ENCODE measurements at regions of chr15 and their contacts with region 1.

Region 1: DNA sequence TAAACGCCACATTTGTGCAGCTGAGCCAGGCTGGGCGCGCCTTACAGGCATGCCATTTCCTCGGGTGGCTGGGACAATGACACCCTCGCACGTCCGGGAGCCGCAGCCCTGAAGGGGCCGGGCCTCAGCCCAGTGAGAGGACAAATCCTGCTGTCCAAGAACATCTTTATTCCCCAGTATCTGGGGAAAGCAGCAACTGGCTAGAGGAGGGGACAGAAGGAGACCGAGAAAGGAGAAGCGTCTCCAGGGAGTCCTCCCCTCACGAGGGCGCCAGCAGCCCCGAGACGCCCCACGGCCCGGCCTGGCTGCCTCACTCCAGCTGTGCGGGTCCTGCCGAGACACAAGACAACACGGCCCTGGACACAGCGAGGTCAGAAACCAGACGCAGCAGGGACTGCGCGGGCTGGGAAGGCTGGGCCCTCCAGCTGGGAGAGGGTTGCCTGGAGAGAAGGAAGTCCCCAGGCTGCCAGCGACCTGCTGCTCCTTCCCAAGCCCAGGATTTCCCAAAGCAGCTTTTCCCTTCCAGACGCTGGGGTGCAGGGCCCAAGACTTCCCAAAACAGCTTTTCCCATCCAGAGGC is 130.2 kb downstream of the CHSY1 start:
- DNase-seq: peak; percentile 50 to 66 (median 53)
- H3K4me3 ChIP-seq: peak overlapping the region; percentile 14 to 39 (median 37)
- H3K4me3 Mint-ChIP-seq: peak overlapping the region; percentile 85 to 87
- H3K27ac ChIP-seq: no peak overlapping the region
- H3K27ac Mint-ChIP-seq: peak overlapping the region in 6 of 7 donors; percentile 26 to 88 (median 68)
- H3K4me1 ChIP-seq: peaks cover 46 to 57% of the 10 kb centered on the region in 2 donors
- H3K4me1 Mint-ChIP-seq: peaks cover 57% of the 10 kb centered on the region
- H3K27me3 ChIP-seq: no peaks in the 10 kb centered on the region
- H3K27me3 Mint-ChIP-seq: peaks cover 1 to 6% (median 2%) of the 10 kb centered on the region in 3 donors
- CTCF ChIP-seq: peak; percentile 41

Region 2: GRCh38 chr15:101242160-101242998 is 120.8 kb after region 1 on chr15:
- intact Hi-C with region 1: loop called in 1 of 2 experiments (anchors 2 kb)
- DNase-seq: peak; percentile 85 to 91 (median 87)
- H3K4me3 ChIP-seq: peak overlapping the region in 2 of 3 experiments; percentile 33 to 69
- H3K4me3 Mint-ChIP-seq: peak overlapping the region; percentile 70 to 76
- H3K27ac ChIP-seq: peak overlapping the region; percentile 87
- H3K27ac Mint-ChIP-seq: peak overlapping the region; percentile 89 to 97 (median 96)
- H3K4me1 ChIP-seq: peaks cover 99 to 100% of the 10 kb centered on the region in 2 donors
- H3K4me1 Mint-ChIP-seq: peaks cover 96% of the 10 kb centered on the region
- H3K27me3 ChIP-seq: no peaks in the 10 kb centered on the region
- H3K27me3 Mint-ChIP-seq: peaks cover 0 to 2% (median 0%) of the 10 kb centered on the region in 3 donors
- CTCF ChIP-seq: no peak

Region 3: DNA sequence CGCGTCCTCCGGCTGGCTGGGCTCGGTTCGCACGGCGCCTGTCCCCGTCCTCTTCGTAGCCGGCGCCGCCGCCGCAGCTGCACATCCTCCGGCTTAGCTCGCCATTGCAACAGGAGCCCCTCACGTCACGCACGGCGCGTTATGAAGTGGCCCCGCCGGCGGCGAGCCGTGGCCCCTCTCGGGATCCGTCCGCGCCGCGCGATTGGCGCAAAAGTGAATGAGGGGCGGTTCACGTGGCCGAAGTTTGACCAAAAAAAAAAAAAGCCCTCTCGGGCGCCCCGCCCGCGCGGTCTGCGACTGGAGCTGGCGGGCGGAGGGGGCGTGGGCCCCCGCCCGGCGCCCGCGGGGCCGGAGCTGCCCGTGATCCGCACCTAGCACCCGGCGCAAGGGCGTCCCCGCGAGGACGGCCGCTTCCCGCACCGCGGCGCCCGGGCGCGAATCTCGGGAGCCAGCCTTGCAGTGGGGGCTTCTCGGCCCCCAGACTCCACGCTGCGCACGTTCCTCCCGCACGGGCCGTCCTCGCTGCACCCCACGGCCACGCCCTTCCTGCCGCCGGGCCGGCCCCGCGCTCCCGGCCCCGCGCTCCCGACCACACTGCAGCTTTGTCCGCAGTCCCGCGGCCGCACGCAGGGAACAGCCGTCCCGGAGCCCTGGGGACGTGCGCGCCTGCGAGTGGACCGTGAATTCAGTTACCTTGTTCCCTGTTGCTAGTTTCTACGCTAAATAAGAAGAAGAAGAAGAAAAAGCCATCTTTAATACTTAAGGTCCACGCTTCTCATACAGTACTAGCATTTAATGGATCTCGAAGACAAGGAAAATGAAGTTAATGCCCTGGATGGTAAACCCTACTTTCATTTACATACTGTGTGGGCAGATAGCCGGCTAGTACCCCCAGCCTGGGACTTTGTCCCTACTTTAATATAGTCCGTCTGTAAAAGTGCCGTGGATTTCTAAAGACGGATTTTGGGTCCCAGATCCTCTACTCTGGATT is 130.5 kb after region 1 on chr15 and contains the start of gene CHSY1:
- intact Hi-C with region 1: loop called (anchors 2 to 5 kb)
- DNase-seq: peak; percentile 93 to 95 (median 94)
- H3K4me3 ChIP-seq: peak within 1 kb of the TSS; percentile 87 to 96 (median 92)
- H3K4me3 Mint-ChIP-seq: peak within 1 kb of the TSS; percentile 95 to 96
- H3K27ac ChIP-seq: peak within 1 kb of the TSS; percentile 48 to 83
- H3K27ac Mint-ChIP-seq: peak within 1 kb of the TSS; percentile 84 to 92 (median 92)
- H3K4me1 ChIP-seq: peaks cover 46 to 48% of the 10 kb centered on the region in 2 donors
- H3K4me1 Mint-ChIP-seq: peaks cover 48% of the 10 kb centered on the region
- H3K27me3 ChIP-seq: no peaks in the 10 kb centered on the region
- H3K27me3 Mint-ChIP-seq: peaks cover 2 to 11% (median 7%) of the 10 kb centered on the region in 3 donors
- CTCF ChIP-seq: no peak
- polyA plus RNA-seq, gene CHSY1: 2.7 to 19.0 (median 3.0) TPM

Region 4: DNA sequence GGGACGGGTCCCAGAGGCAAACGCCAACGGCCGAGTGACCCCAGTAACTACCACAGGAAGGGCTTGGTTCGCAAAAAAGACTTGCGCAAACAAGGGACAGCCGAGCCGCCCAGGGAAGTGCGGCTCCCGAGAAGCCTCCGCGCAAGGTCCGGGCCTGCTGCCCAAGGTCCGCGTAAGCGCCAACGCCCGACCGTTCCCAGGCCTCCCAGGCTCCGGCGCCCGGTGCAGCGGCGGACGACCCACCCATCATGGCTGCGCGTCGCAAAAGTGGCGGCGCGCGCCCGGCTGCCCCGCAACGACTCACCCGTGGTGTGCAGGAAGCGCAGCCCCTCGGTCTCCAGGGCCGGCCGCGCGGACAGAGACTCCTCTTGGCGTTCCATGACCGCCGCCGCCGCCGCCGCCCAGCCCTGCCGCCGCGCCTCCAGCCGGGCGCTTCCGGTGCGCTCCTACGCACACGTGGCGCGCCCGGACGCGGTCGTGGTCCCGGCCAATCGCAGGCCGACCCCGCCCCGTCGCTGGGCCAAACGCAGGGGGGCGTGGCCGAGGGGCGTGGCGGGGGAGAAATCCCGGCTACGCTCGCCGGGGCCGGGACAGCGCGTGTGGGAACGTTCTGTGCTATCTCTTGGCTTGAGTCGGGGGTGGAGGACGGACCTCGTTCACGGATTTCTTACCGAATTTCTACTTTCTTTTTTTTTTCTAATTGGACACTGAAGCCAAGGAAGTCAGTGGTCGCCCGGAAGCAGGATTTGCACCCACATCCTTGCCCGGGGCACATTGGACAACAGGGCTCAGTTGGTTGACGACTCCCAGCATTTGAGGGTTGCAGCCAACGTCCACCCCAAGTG is 155.7 kb after region 1 on chr15 and contains the start of gene SELENOS:
- intact Hi-C with region 1: no loop called
- DNase-seq: peak; percentile 84 to 88 (median 88)
- H3K4me3 ChIP-seq: peak within 1 kb of the TSS; percentile 78 to 89 (median 80)
- H3K4me3 Mint-ChIP-seq: peak within 1 kb of the TSS; percentile 96 to 98
- H3K27ac ChIP-seq: peak within 1 kb of the TSS; percentile 91 to 92
- H3K27ac Mint-ChIP-seq: peak within 1 kb of the TSS; percentile 96 to 98 (median 98)
- H3K4me1 ChIP-seq: peaks cover 17 to 20% of the 10 kb centered on the region in 2 donors
- H3K4me1 Mint-ChIP-seq: peaks cover 20% of the 10 kb centered on the region
- H3K27me3 ChIP-seq: no peaks in the 10 kb centered on the region
- H3K27me3 Mint-ChIP-seq: peaks cover 0 to 5% (median 0%) of the 10 kb centered on the region in 3 donors
- CTCF ChIP-seq: no peak
- polyA plus RNA-seq, gene SELENOS: 40.2 to 70.2 (median 51.6) TPM